Mammary epithelial cell (primary cell): ENCODE measurements at regions of chr11 and their contacts with region 1.

Region 1: DNA sequence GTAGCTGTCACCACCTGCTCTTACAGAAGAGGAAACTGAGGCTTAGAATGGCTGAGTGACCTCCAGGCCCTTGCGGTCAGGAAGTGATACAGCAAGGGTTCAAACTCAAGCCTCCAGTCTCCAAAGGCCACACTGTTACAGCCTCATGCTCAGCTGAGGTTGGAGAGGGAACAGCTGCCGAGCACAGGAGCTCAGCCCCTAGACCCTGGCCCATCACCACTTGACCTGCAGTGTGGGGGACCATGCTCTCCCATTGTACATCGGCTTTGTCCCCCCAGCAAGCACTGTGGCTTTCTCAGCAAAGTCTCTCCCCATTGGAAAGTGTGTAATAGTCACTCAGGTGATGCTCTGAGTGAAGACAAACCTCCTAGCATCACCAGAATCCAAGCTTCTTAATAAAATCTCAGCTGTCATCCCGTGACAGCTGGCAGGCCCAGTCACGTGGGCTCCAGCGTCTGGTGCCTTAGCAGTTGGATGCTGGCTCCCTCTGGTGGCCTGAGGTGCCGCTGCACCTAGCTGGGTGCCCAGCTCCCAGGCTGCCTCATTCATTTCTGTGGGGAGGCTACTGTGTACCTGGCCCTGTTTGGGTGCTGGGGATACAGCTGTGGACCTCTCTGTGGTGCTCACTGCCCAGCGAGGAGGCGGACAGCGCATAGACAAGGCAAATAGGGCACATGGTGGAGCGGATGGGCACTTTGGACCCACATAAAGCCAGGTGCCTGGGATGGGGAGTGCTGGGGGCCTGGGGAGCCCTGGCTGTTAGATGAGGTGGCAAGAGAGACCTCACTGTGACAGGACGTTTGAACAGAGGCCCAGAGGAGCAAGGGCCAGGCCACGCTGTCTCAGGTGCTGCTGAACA is 19.1 kb upstream of the MYRF start:
- DNase-seq: peak; percentile 70
- H3K4me3 ChIP-seq: no peak overlapping the region
- H3K27ac ChIP-seq: no peak overlapping the region
- H3K4me1 ChIP-seq: peaks cover 27% of the 10 kb centered on the region
- H3K27me3 ChIP-seq: no peaks in the 10 kb centered on the region
- CTCF ChIP-seq: peak; percentile 99 to 100

Region 2: GRCh38 chr11:61446211-61446651 is 287.1 kb before region 1 on chr11:
- CTCF ChIA-PET with region 1: no interaction called
- dilution Hi-C with region 1: no loop called
- in situ Hi-C with region 1: loop called in 1 of 2 experiments (anchors 25 kb)
- intact Hi-C with region 1: loop called (anchors 1 kb)
- DNase-seq: peak; percentile 89
- H3K4me3 ChIP-seq: no peak overlapping the region
- H3K27ac ChIP-seq: no peak overlapping the region
- H3K4me1 ChIP-seq: peaks cover 3% of the 10 kb centered on the region
- H3K27me3 ChIP-seq: no peaks in the 10 kb centered on the region
- CTCF ChIP-seq: peak; percentile 95 to 96

Region 3: GRCh38 chr11:61460474-61460881 is 272.9 kb before region 1 on chr11:
- CTCF ChIA-PET with region 1: no interaction called
- dilution Hi-C with region 1: no loop called
- in situ Hi-C with region 1: loop called in 1 of 2 experiments (anchors 25 kb)
- intact Hi-C with region 1: no loop called
- DNase-seq: no peak
- H3K4me3 ChIP-seq: no peak overlapping the region
- H3K27ac ChIP-seq: no peak overlapping the region
- H3K4me1 ChIP-seq: no peaks in the 10 kb centered on the region
- H3K27me3 ChIP-seq: no peaks in the 10 kb centered on the region
- CTCF ChIP-seq: no peak

Region 4: GRCh38 chr11:61639816-61640443 is 93.4 kb before region 1 on chr11:
- CTCF ChIA-PET with region 1: interaction called, 3 read pairs
- dilution Hi-C with region 1: no loop called
- in situ Hi-C with region 1: no loop called
- intact Hi-C with region 1: loop called (anchors 1 kb)
- DNase-seq: peak; percentile 32
- H3K4me3 ChIP-seq: no peak overlapping the region
- H3K27ac ChIP-seq: no peak overlapping the region
- H3K4me1 ChIP-seq: no peaks in the 10 kb centered on the region
- H3K27me3 ChIP-seq: no peaks in the 10 kb centered on the region
- CTCF ChIP-seq: no peak

Region 5: DNA sequence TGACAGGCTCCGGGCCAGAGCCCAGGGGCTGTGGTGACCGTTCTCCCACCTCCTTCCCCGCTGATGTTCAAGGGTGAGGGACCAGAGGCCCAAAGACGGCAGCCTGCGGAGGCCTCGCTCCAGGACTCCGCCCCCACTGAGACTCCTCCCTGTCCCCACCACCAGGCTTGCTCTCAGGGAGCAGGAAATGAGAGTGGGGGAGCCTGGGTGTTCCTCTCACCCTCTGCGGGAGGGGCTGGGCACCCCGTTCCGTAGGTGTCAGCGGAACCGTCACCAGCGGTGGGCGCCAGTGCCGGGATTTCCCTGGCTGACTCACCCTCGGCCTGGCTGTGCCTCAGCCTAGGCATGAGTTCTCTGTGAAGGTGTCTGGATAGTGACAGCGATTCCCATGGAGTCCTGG is 37.4 kb before region 1 on chr11:
- CTCF ChIA-PET with region 1: interaction called, 4 read pairs
- dilution Hi-C with region 1: no loop called
- in situ Hi-C with region 1: no loop called
- intact Hi-C with region 1: loop called (anchors 1 kb)
- DNase-seq: peak; percentile 91
- H3K4me3 ChIP-seq: no peak overlapping the region
- H3K27ac ChIP-seq: peak overlapping the region; percentile 28
- H3K4me1 ChIP-seq: peaks cover 60% of the 10 kb centered on the region
- H3K27me3 ChIP-seq: no peaks in the 10 kb centered on the region
- CTCF ChIP-seq: no peak